Gastrocnemius medialis (tissue), 4 donors: ENCODE measurements at regions of chr7 and their contacts with region 1.

Region 1: DNA sequence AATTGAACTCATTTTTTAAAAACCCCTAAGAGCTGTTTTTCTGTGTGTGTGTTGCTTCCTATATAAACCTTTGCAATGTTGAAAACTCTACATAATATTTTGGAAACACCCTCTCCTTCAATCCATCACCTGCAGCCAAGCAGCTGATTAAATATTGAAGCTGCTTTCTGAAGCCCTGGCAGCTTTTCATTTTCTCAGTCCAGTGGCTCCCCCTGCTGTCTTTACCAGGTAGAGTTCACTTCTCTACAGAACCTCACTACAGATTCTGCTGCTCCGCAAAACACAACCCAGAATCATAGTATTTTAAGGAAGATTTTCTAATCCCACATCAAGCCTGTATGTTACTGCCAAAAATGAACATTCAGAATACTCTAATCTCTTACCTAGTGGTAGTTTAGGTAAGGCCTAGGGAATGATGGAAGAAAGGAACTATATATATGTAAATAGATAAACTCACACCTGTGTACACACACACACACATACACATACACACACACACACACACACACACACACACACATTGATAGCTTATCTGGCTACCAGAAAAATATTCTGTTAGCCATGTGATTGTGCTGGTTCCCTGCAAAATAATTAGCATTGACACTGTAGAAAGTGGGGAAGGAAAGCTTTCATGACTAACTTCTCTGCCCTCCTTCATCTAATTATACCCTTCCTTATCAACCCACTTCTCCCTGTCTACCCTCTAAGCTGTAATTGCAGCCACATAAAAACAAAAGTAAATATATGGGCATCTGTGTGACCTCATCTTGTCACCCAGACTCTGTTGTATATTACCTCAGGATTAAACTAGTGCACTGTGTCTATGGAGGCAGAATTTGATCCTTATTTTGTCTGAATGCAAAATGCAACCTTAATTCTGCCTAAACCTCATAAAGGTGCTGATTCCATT is 229.5 kb upstream of the FZD1 start:
- DNase-seq: peak; percentile 13 to 34
- ATAC-seq: peak; percentile 60 to 70
- H3K4me3 ChIP-seq: no peak overlapping the region
- H3K27ac ChIP-seq: no peak overlapping the region
- H3K4me1 ChIP-seq: no peaks in the 10 kb centered on the region
- H3K27me3 ChIP-seq: no peaks in the 10 kb centered on the region
- CTCF ChIP-seq: peak; percentile 49 to 69 (median 58)
- POLR2A ChIP-seq: no peak

Region 2: GRCh38 chr7:89771003-89771636 is 1263.6 kb before region 1 on chr7:
- in situ Hi-C with region 1: no loop called
- intact Hi-C with region 1: no loop called
- DNase-seq: no peak
- ATAC-seq: no peak
- H3K4me3 ChIP-seq: no peak overlapping the region
- H3K27ac ChIP-seq: no peak overlapping the region
- H3K4me1 ChIP-seq: no peaks in the 10 kb centered on the region
- H3K27me3 ChIP-seq: no peaks in the 10 kb centered on the region
- CTCF ChIP-seq: no peak
- POLR2A ChIP-seq: no peak

Region 3: GRCh38 chr7:90709501-90710465 is 324.9 kb before region 1 on chr7:
- in situ Hi-C with region 1: no loop called
- intact Hi-C with region 1: loop called (anchors 10 kb)
- DNase-seq: no peak
- ATAC-seq: no peak
- H3K4me3 ChIP-seq: no peak overlapping the region
- H3K27ac ChIP-seq: no peak overlapping the region
- H3K4me1 ChIP-seq: peaks cover 0 to 15% of the 10 kb centered on the region in 2 donors
- H3K27me3 ChIP-seq: no peaks in the 10 kb centered on the region
- CTCF ChIP-seq: no peak
- POLR2A ChIP-seq: no peak

Region 4: GRCh38 chr7:90931986-90932916 is 102.5 kb before region 1 on chr7:
- in situ Hi-C with region 1: no loop called
- intact Hi-C with region 1: loop called (anchors 1 kb)
- DNase-seq: peak; percentile 67 to 82
- ATAC-seq: peak; percentile 91 to 95
- H3K4me3 ChIP-seq: no peak overlapping the region
- H3K27ac ChIP-seq: peak overlapping the region; percentile 74 to 84 (median 78)
- H3K4me1 ChIP-seq: peaks cover 36 to 45% of the 10 kb centered on the region in 2 donors
- H3K27me3 ChIP-seq: no peaks in the 10 kb centered on the region
- CTCF ChIP-seq: no peak
- POLR2A ChIP-seq: no peak

Region 5: DNA sequence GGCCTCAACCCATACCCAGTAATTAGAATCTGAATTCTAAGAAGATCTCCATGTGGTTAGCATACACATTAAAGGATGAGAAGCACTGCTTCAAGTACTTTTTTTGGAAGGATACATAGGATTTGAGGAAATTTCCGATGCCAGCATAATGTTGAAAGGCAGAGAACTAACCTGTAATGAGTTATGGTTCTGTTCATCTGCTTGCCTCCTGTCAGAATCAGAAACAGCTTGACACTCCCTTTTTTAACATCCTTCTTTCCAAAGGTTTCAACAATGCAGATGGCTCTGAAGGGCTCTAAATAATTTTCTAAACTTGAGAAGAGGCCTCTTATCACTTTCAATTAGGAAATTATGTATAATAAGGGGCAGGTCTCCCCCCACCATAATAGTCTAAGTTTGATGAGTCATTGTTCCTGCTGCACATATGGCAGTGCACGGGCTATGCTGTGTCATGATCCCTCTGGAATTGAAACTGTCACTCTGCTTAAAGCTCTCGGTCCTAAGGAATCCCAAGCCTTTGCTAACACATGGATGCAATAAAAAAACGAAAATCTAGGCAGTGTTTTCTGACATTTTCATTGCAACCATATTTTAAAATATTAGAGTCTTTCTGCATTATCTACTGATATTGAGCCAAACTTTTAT is 61.7 kb before region 1 on chr7:
- in situ Hi-C with region 1: no loop called
- intact Hi-C with region 1: no loop called
- DNase-seq: no peak
- ATAC-seq: no peak
- H3K4me3 ChIP-seq: no peak overlapping the region
- H3K27ac ChIP-seq: no peak overlapping the region
- H3K4me1 ChIP-seq: no peaks in the 10 kb centered on the region
- H3K27me3 ChIP-seq: no peaks in the 10 kb centered on the region
- CTCF ChIP-seq: no peak
- POLR2A ChIP-seq: no peak